Psoas muscle (tissue), 8 donors: ENCODE measurements at regions of chr20 and their contacts with region 1.

Region 1: DNA sequence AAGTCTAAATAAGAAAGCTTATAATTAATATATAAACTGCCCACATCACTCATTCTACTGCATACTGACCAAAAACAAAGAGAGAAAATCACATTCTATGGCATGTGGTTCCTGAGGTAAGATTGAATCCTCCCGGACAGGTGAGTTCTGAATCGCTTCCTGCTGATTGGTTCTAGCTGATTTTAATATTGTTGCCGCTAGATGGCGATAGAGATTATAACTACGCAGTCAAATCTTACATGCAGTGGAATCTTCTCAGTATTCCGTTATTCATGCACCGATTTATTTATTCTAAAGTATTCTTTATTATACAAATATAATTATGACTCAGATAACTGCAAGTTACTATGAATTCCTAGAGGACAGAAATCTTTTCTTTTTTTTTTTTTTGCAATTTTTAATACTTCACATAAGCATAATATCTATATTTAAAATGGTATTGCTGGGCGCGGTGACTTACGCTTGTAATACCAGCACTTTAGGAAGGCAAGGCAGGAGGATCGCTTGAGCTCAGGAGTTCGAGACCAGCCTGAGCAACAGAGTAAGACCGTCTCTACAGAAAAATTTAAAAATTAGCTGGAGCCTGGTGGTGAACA is 24.2 kb upstream of the TMX4 start:
- DNase-seq: no peak
- ATAC-seq: peak; percentile 59 to 93 (median 72)
- H3K4me3 ChIP-seq: no peak overlapping the region
- H3K27ac ChIP-seq: no peak overlapping the region
- H3K4me1 ChIP-seq: no peaks in the 10 kb centered on the region
- H3K27me3 ChIP-seq: no peaks in the 10 kb centered on the region
- CTCF ChIP-seq: peak; percentile 85

Region 2: GRCh38 chr20:7967199-7967844 is 76.5 kb before region 1 on chr20:
- intact Hi-C with region 1: no loop called
- DNase-seq: no peak
- ATAC-seq: peak in 2 of 4 donors; percentile 17 to 49
- H3K4me3 ChIP-seq: no peak overlapping the region
- H3K27ac ChIP-seq: no peak overlapping the region
- H3K4me1 ChIP-seq: no peaks in the 10 kb centered on the region
- H3K27me3 ChIP-seq: peaks cover 0 to 3% (median 0%) of the 10 kb centered on the region in 3 donors
- CTCF ChIP-seq: no peak

Region 3: GRCh38 chr20:8389381-8390036 is 345.7 kb after region 1 on chr20:
- intact Hi-C with region 1: loop called (anchors 2 to 5 kb)
- DNase-seq: no peak
- ATAC-seq: peak in 3 of 4 donors; percentile 42 to 79 (median 66)
- H3K4me3 ChIP-seq: peak overlapping the region; percentile 37
- H3K27ac ChIP-seq: no peak overlapping the region
- H3K4me1 ChIP-seq: peaks cover 27% of the 10 kb centered on the region
- H3K27me3 ChIP-seq: no peaks in the 10 kb centered on the region
- CTCF ChIP-seq: peak; percentile 62